Heart right ventricle (tissue), 16 donors: ENCODE measurements at regions of chr3 and their contacts with region 1.

Region 1: DNA sequence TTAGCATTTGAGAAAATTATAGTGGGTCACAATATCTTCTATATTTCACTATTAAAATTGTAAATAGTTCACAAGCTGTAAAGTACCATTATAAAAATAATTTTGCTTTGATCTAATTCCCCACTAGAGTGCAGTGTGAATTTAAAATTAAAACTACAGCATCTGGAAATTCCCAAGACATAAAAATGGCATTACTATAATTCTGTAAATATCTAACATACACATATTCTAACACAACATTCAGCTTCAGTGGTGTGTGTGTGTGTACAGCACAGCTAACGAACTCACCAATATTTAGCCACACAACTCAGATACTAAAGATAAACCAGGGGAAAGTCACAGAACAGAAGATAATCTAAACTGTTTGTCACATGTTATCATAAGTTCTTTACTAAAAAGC is 424.9 kb upstream of the ZNF385D start:
- DNase-seq: no peak
- ATAC-seq: no peak
- H3K4me3 ChIP-seq: no peak overlapping the region
- H3K27ac ChIP-seq: no peak overlapping the region
- H3K4me1 ChIP-seq: no peaks in the 10 kb centered on the region
- H3K27me3 ChIP-seq: no peaks in the 10 kb centered on the region
- CTCF ChIP-seq: peak in 4 of 9 donors; percentile 28 to 37 (median 34)

Region 2: GRCh38 chr3:22565393-22565792 is 389.4 kb after region 1 on chr3:
- intact Hi-C with region 1: loop called in 1 of 10 experiments (anchors 10 kb)
- DNase-seq: no peak
- ATAC-seq: no peak
- H3K4me3 ChIP-seq: no peak overlapping the region
- H3K27ac ChIP-seq: no peak overlapping the region
- H3K4me1 ChIP-seq: no peaks in the 10 kb centered on the region
- H3K27me3 ChIP-seq: no peaks in the 10 kb centered on the region
- CTCF ChIP-seq: no peak